ENCODE measurements at regions of chr15 and their contacts with region 1.

Region 1: GRCh38 chr15:66877477-66878271 is 175.6 kb downstream of the SMAD6 start:
- DNase-seq: peak in 1 of 2 experiments; percentile 39
- H3K4me3 ChIP-seq: no peak overlapping the region
- H3K27ac ChIP-seq: no peak overlapping the region
- H3K4me1 ChIP-seq: peaks cover 0 to 3% (median 0%) of the 10 kb centered on the region in 4 experiments; a peak in 1 of 7 replicates
- H3K27me3 ChIP-seq: no peaks in the 10 kb centered on the region
- CTCF ChIP-seq: no peak
- EP300 ChIP-seq: no peak
- POLR2A ChIP-seq: no peak
- RAD21 ChIP-seq: no peak

Region 2: DNA sequence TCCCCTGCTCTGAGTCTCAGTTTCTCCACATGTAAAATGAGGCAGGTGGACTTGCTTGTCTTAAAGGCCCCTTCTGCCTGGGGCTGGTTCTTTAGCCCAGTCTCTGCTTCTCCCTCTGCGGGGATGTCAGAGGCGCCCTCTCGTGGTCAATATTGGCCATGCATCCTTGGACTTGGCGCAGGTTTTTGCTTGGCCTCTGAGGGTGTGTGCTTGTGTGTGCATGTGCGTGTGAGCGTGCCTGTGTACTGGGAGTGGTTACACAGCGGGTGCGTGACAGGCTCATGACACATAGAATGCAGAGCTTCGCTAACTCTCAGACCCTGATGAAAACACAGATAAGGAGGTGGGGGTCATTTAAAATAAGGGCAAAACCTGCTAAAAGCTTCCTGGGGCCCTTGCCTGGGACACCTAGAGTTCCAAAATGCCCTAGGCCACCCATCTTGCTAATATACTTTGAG is 14.8 kb before region 1 on chr15:
- CTCF ChIA-PET with region 1: interaction called, 11 read pairs
- POLR2A ChIA-PET with region 1: no interaction called
- DNase-seq: peak; percentile 77 to 95
- H3K4me3 ChIP-seq: no peak overlapping the region
- H3K27ac ChIP-seq: no peak overlapping the region
- H3K4me1 ChIP-seq: peaks cover 0 to 6% (median 3%) of the 10 kb centered on the region in 4 experiments; a peak in 5 of 7 replicates
- H3K27me3 ChIP-seq: no peaks in the 10 kb centered on the region
- CTCF ChIP-seq: peak; percentile 90 to 96 (median 95)
- EP300 ChIP-seq: no peak
- POLR2A ChIP-seq: no peak
- RAD21 ChIP-seq: peak; percentile 80 to 83

Region 3: DNA sequence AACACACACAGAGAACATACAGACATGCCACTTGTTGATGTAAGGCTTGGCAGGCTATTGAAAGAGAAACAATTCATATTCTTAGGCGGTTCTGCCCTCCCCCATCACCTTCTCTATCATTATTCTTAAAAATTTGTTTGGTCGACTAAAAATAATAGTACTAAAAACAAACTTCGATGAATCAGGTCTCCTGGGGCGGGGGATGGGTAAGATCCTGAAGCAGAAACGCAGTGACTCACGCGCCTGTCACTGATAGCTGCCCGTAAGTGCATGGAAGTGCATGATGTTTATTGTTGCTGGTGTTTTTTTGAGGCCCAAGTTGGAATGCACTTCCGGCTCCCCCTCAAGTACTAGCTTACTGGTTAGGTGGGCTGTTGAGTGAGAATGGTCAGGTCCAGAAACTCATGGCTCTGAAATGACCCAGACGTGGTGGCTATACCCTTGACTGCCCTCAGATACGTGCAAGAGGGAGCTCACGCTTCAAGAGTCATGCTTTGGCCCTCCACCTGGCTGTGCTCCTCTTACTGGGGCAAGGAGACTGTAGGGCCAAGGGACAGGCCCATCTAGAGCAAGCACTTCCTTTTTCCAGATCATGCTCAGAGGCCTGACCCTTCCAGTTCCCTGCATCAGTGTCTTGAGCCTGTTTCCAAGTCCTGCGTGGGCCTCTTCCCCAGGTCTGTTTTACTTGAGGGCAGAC is 198.6 kb after region 1 on chr15:
- CTCF ChIA-PET with region 1: no interaction called
- POLR2A ChIA-PET with region 1: no interaction called
- DNase-seq: no peak
- H3K4me3 ChIP-seq: no peak overlapping the region
- H3K27ac ChIP-seq: no peak overlapping the region
- H3K4me1 ChIP-seq: peaks cover 0 to 11% (median 4%) of the 10 kb centered on the region in 4 experiments; a peak in 4 of 7 replicates
- H3K27me3 ChIP-seq: no peaks in the 10 kb centered on the region
- CTCF ChIP-seq: no peak
- EP300 ChIP-seq: no peak
- POLR2A ChIP-seq: no peak
- RAD21 ChIP-seq: no peak